ENCODE measurements at regions of chr21 and their contacts with region 1.

Region 1: GRCh38 chr21:44454747-44455523 is at the start of gene LRRC3:
- DNase-seq: peak; percentile 91
- H3K4me3 ChIP-seq: peak within 1 kb of the TSS; percentile 61
- H3K27ac ChIP-seq: no peak within 1 kb of the TSS
- H3K4me1 ChIP-seq: no peaks in the 10 kb centered on the region
- H3K27me3 ChIP-seq: peaks cover 26% of the 10 kb centered on the region
- CTCF ChIP-seq: no peak
- total RNA-seq, gene LRRC3: 1.5 and 3.1 TPM in 2 replicates

Region 2: GRCh38 chr21:44353191-44353970 is 101.6 kb before region 1 on chr21 and contains the start of gene TRPM2:
- CTCF ChIA-PET with region 1: no interaction called
- POLR2A ChIA-PET with region 1: interaction called, 9 read pairs
- intact Hi-C with region 1: loop called (anchors 10 kb)
- DNase-seq: no peak
- H3K4me3 ChIP-seq: no peak within 1 kb of the TSS
- H3K27ac ChIP-seq: no peak within 1 kb of the TSS
- H3K4me1 ChIP-seq: peaks cover 8% of the 10 kb centered on the region
- H3K27me3 ChIP-seq: peaks cover 32% of the 10 kb centered on the region
- CTCF ChIP-seq: no peak
- total RNA-seq, gene TRPM2: 0.21 TPM in 1 of 2 replicates, not detected in the other

Region 3: GRCh38 chr21:44657635-44658540 is 203.0 kb after region 1 on chr21 and contains the start of gene KRTAP12-3:
- CTCF ChIA-PET with region 1: no interaction called
- POLR2A ChIA-PET with region 1: no interaction called
- intact Hi-C with region 1: no loop called
- DNase-seq: no peak
- H3K4me3 ChIP-seq: no peak within 1 kb of the TSS
- H3K27ac ChIP-seq: no peak within 1 kb of the TSS
- H3K4me1 ChIP-seq: no peaks in the 10 kb centered on the region
- H3K27me3 ChIP-seq: no peaks in the 10 kb centered on the region
- CTCF ChIP-seq: no peak
- total RNA-seq, gene KRTAP12-3: not detected in 2 replicates

Measured in A673 (cell line).